ENCODE measurements at regions of chr14 and their contacts with region 1.

Region 1: DNA sequence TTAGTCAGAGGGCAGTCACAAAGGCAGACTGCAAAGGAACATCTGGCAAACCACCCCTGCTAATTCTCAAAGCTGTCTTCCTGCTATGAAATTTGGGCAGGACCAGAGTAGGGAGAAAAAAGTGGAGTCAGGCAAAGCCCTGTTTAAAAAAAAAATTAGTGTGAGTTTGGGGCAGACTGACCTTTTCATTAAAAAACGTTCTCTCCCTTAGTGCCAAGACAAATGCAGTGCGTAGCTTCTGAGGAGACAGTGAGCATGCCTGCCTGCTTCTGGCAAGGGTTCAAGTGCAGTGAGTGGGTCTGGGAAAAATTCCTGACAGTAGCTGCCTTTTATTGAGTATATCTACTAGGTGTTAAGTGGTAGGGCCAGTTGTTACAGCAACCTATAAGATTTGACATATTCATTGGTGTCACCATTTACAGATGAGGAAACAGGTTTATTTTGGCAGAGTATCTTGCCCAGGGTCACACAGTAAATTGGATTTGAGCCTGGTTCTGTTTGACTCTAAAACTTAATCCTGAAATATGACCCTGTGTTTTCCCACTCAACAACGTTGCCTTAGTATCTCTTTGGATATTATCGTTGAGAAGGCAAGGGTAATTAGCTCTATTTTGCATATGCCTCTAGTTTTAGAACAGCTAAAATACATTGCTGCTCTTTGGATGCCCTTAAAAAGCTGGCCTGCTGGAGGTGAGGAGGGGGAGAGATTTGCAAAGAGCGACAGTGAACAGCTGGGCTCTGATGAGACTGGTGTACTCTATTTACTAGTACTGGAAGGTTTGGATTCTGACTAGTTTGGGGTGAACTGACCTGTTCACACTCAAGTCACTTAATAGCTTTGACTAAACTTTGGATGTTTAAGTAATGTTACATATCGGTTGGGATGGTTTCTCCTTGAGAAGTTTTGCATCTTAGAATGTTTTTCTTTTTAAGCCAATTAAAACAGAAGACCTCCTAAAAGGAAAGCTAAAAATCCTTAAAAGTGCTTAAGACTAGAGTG is 72.8 kb downstream of the PAPOLA start:
- DNase-seq: no peak
- ATAC-seq: no peak

Region 2: GRCh38 chr14:95835331-95835730 is 739.6 kb before region 1 on chr14:
- intact Hi-C with region 1: no loop called
- DNase-seq: no peak
- ATAC-seq: no peak

Region 3: GRCh38 chr14:96735526-96735925 is 160.6 kb after region 1 on chr14:
- intact Hi-C with region 1: loop called in 1 of 2 experiments (anchors 10 kb)
- DNase-seq: no peak
- ATAC-seq: no peak